Uterus (tissue), 4 donors: ENCODE measurements at regions of chr9 and their contacts with region 1.

Region 1: DNA sequence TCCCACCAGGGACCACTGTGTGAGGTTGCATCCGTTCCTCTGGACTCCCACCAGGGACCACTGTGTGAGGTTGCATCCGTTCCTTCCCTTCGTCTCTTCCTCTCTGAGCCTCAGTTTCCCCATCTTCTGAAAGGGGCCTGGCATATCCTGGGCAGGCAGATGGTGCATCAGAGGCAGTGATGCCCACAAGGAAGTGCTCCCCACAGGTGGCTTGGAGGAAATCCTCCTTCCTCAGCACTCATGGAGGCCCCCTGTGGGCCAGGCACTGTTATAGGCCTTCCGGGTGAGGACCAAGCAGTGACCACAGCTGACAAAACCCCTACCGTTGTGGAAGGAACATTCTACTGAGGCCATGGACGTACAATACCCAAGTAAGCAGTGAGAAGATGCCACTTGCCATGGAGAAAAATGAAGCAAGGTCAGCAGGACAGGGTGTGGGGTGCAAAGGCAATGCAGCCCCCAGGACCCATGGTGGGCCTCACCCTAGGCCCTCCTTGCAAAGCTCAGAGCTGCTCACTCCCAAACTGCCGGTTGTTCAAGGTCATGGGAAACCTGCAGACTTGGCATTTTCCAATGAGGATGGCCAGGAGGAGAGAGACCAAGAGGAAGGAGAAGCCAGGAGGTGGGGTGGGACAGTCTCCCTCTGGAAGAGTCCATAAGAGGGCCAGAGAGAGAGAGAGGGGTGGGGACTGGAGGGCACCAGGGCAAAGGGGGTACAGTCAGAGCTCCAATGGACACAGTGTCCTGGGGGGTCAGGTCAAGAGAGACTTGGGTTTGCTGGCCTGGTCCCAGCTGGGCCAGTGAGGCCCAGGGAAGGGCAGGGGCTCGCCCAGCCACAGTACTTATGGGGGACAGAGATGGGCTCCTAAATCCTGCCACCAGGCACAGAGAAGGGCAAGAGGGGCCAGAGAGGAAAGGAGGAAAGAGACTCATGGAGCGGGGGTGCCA is 51.1 kb downstream of the C9orf50 start:
- DNase-seq: no peak
- H3K4me3 ChIP-seq: peak overlapping the region; percentile 29 to 56
- H3K27ac ChIP-seq: peak overlapping the region; percentile 86 to 87
- H3K4me1 ChIP-seq: peaks cover 0 to 12% of the 10 kb centered on the region in 2 donors
- H3K27me3 ChIP-seq: no peaks in the 10 kb centered on the region
- CTCF ChIP-seq: peak in 3 of 4 experiments; percentile 29 to 49 (median 43)
- POLR2A ChIP-seq: no peak

Region 2: DNA sequence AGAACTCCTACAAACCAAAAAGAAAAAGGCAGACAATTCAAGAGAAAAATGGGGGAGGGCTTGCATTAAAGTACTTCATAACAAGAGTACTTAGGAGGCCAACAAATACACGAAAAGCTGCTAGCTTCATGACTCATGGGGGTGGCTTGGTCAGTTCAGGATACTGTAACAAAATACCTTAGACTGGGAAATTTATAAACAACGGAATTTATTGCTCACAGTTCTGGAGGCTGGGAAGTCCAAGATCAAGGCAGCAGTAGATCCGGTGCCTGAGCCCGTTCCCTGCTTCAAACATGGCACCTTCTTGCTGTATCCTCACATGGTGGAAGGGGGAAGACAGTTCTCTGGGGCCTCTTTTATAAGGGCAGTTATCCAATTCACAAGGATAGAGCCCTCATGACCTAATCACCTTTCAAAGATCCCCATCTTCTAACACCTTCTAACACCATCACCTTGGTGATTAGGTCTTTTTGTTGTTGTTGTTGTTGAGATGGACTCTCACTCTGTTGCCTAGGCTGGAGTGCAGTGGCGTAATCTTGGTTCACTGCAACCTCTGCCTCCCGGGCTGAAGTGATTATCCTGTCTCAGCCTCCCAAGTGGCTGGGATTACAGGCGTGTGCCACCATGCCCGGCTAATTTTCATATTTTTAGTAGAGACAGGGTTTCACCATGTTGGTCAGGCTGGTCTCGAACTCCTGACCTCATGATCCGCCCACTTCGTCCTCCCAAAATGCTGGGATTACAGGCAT is 60.1 kb before region 1 on chr9:
- intact Hi-C with region 1: loop called (anchors 10 kb)
- DNase-seq: no peak
- H3K4me3 ChIP-seq: no peak overlapping the region
- H3K27ac ChIP-seq: no peak overlapping the region
- H3K4me1 ChIP-seq: no peaks in the 10 kb centered on the region
- H3K27me3 ChIP-seq: no peaks in the 10 kb centered on the region
- CTCF ChIP-seq: no peak
- POLR2A ChIP-seq: no peak